Sigmoid colon (tissue), 7 donors: ENCODE measurements at regions of chr14 and their contacts with region 1.

Region 1: DNA sequence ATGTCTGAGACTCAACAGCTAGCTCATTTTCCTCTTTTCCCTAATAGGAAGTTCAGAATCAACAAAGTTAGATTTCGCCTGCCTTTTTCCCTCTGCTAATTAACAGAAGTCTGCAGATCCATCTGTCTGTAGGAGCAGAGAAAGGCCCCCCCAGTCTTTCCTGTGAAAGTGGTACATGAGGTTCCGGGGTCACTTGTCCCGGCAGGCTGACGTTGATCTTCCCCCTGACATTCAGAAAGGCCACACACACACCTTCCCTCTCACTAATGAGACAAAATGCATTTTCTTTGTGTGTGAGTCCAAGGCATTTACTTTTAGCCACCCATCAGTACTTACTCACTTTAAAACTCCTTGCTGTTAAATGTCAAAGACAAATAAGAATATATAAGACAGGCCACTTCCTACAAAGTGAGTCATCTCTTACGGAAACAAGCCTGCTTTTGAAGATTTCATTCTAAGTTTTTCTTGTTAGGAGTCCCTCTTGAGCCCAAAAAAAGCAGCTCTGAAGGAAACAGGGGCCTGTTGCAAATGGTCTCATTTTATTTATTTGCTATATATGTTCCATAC is 138.7 kb downstream of the TTC7B start:
- DNase-seq: no peak
- H3K4me3 ChIP-seq: no peak overlapping the region
- H3K27ac ChIP-seq: peak overlapping the region; percentile 75 to 86 (median 84)
- H3K4me1 ChIP-seq: peaks cover 0 to 57% (median 47%) of the 10 kb centered on the region in 4 donors
- H3K27me3 ChIP-seq: no peaks in the 10 kb centered on the region
- CTCF ChIP-seq: no peak
- EP300 ChIP-seq: peak; percentile 59 to 84 (median 66)
- POLR2A ChIP-seq: no peak

Region 2: GRCh38 chr14:90554341-90554740 is 123.2 kb before region 1 on chr14:
- intact Hi-C with region 1: loop called (anchors 5 kb)
- DNase-seq: peak; percentile 79
- H3K4me3 ChIP-seq: no peak overlapping the region
- H3K27ac ChIP-seq: peak overlapping the region; percentile 73 to 89 (median 84)
- H3K4me1 ChIP-seq: peaks cover 0 to 79% (median 73%) of the 10 kb centered on the region in 4 donors
- H3K27me3 ChIP-seq: no peaks in the 10 kb centered on the region
- CTCF ChIP-seq: no peak
- EP300 ChIP-seq: no peak
- POLR2A ChIP-seq: no peak

Region 3: GRCh38 chr14:90593254-90594040 is 84.1 kb before region 1 on chr14:
- intact Hi-C with region 1: no loop called
- DNase-seq: peak; percentile 55
- H3K4me3 ChIP-seq: no peak overlapping the region
- H3K27ac ChIP-seq: no peak overlapping the region
- H3K4me1 ChIP-seq: no peaks in the 10 kb centered on the region
- H3K27me3 ChIP-seq: no peaks in the 10 kb centered on the region
- CTCF ChIP-seq: no peak
- EP300 ChIP-seq: no peak
- POLR2A ChIP-seq: no peak

Region 4: DNA sequence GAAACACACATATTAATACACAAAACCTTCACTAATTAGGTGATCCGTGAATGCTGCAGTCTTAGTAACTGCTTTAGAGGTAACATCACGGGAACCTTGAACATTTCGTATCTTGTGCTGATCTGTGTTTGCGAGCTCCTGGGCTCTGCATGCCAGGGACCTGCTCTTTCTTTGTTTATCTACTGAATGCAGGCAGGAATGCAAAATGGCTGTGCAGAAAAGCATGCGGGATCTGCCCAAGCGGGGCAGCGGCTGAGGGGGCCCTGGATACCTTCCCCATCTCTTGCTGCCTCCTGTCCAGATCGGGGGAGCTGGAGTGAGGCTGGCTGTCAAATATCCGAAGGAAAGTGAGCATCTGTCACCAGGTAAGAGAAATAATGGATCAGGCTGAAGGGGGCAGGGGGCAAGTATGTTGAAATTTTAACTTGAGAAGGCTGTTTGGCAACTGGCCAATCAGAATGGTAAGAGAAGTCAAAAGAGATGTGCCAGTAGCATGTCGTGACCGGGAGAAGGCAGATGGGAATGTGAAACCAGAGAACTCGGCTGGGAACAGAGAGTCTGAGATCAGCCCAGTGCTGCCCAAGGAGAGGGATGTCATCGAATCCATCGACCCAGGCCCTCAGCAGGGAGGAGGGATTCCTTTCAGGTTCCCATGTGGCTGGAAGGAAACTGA is 52.7 kb before region 1 on chr14:
- intact Hi-C with region 1: loop called (anchors 5 kb)
- DNase-seq: no peak
- H3K4me3 ChIP-seq: no peak overlapping the region
- H3K27ac ChIP-seq: peak overlapping the region; percentile 71 to 84 (median 76)
- H3K4me1 ChIP-seq: peaks cover 0 to 58% (median 52%) of the 10 kb centered on the region in 4 donors
- H3K27me3 ChIP-seq: no peaks in the 10 kb centered on the region
- CTCF ChIP-seq: no peak
- EP300 ChIP-seq: no peak
- POLR2A ChIP-seq: no peak

Region 5: GRCh38 chr14:90645842-90646443 is 31.6 kb before region 1 on chr14:
- intact Hi-C with region 1: loop called (anchors 2 kb)
- DNase-seq: no peak
- H3K4me3 ChIP-seq: no peak overlapping the region
- H3K27ac ChIP-seq: peak overlapping the region; percentile 75 to 86 (median 81)
- H3K4me1 ChIP-seq: peaks cover 0 to 66% (median 57%) of the 10 kb centered on the region in 4 donors
- H3K27me3 ChIP-seq: no peaks in the 10 kb centered on the region
- CTCF ChIP-seq: no peak
- EP300 ChIP-seq: no peak
- POLR2A ChIP-seq: no peak

Region 6: DNA sequence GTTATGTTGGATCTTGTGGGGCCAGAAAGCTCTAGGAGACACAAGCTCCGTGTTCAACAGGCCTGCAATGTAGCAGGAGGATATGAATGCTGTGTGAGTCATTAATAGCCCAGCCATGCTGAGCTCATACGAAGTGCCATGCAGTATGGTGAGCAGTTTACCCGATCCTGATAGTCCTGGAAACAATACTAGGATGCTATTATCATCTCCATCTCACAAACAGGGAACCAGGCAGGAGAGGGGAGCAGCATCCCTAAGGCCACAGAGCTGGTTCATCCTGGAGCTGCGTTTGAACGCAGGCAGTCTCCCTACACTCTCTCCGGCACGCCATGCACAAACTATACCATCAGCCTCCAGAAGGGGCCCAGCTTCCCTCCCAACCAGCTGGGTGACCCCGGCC is 118.2 kb after region 1 on chr14:
- intact Hi-C with region 1: no loop called
- DNase-seq: no peak
- H3K4me3 ChIP-seq: no peak overlapping the region
- H3K27ac ChIP-seq: no peak overlapping the region
- H3K4me1 ChIP-seq: peaks cover 0 to 16% (median 3%) of the 10 kb centered on the region in 4 donors
- H3K27me3 ChIP-seq: no peaks in the 10 kb centered on the region
- CTCF ChIP-seq: no peak
- EP300 ChIP-seq: no peak
- POLR2A ChIP-seq: no peak

Region 7: GRCh38 chr14:90850487-90850886 is 172.9 kb after region 1 on chr14:
- intact Hi-C with region 1: no loop called
- DNase-seq: no peak
- H3K4me3 ChIP-seq: no peak overlapping the region
- H3K27ac ChIP-seq: no peak overlapping the region
- H3K4me1 ChIP-seq: no peaks in the 10 kb centered on the region
- H3K27me3 ChIP-seq: no peaks in the 10 kb centered on the region
- CTCF ChIP-seq: no peak
- EP300 ChIP-seq: no peak
- POLR2A ChIP-seq: no peak

Region 8: DNA sequence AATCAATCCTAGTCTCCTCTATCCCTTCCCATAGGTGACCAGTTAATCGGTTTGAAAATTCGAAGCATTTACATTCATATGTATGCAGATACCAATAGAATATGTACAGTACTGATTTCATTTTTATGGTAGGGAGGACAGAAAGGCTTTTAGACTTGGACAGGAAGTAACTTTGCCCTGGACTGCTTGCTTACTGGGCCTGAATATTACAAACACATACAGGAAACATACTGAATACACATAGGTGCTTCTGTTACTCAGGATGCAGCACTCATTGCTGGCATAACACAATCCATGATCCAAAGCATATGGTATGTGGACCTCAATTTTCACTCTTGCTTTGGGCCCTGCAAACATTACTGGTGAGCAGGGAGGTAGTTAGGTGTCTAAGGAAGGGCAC is 983.2 kb after region 1 on chr14:
- intact Hi-C with region 1: no loop called
- DNase-seq: no peak
- H3K4me3 ChIP-seq: no peak overlapping the region
- H3K27ac ChIP-seq: no peak overlapping the region
- H3K4me1 ChIP-seq: no peaks in the 10 kb centered on the region
- H3K27me3 ChIP-seq: no peaks in the 10 kb centered on the region
- CTCF ChIP-seq: no peak
- EP300 ChIP-seq: no peak
- POLR2A ChIP-seq: no peak